Head of caudate nucleus (tissue), 42 donors: ENCODE measurements at regions of chr3 and their contacts with region 1.

Region 1: DNA sequence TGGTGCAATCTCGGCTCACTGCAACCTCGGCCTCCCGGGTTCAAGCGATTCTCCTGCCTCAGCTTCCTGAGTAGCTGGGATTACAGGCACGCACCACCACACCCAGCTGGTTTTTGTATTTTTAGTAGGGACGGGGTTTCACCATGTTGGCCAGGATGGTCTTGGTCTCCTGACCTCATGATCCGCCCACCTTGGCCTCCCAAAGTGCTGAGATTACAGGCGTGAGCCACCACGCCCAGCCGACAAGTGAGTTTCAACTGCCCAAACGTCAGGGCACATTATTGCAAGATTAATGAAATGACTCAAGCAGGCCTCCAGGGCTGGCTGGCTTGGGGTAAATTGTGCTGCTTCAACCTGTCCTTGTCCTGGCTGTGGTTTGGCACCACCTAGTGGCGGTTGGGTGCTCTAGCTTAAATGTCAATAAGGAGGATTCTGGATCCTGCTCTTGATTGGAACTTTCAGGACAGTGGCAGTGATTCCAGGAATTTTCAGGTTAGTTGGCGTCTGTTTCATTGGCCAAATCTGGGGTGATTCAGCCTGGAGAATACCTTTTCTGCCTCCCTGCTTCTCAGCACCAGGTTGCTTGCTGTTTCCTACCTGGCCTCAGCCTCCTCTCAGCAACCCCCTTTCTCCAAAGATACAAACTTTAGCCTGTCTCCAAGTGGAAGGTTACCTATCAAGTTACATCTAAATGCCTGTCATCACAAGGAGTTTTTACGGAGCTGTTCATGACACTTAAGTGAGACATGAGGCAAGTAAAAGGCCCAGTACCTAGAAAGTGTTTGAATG is 32.4 kb upstream of the SACM1L start:
- DNase-seq: peak; percentile 81 to 97 (median 91)

Region 2: GRCh38 chr3:45224824-45225464 is 431.8 kb before region 1 on chr3:
- intact Hi-C with region 1: loop called (anchors 10 kb)
- DNase-seq: peak; percentile 66 to 91 (median 80)

Region 3: GRCh38 chr3:45513041-45513440 is 143.7 kb before region 1 on chr3:
- intact Hi-C with region 1: loop called (anchors 2 kb)
- DNase-seq: no peak

Region 4: GRCh38 chr3:45593708-45594609 is 62.8 kb before region 1 on chr3:
- intact Hi-C with region 1: loop called (anchors 5 kb)
- DNase-seq: peak in 38 of 42 donors; percentile 19 to 75 (median 48)

Region 5: GRCh38 chr3:45730409-45731154 is 73.8 kb after region 1 on chr3:
- intact Hi-C with region 1: no loop called
- DNase-seq: no peak

Region 6: GRCh38 chr3:45968706-45969105 is 311.9 kb after region 1 on chr3:
- intact Hi-C with region 1: no loop called
- DNase-seq: no peak

Region 7: DNA sequence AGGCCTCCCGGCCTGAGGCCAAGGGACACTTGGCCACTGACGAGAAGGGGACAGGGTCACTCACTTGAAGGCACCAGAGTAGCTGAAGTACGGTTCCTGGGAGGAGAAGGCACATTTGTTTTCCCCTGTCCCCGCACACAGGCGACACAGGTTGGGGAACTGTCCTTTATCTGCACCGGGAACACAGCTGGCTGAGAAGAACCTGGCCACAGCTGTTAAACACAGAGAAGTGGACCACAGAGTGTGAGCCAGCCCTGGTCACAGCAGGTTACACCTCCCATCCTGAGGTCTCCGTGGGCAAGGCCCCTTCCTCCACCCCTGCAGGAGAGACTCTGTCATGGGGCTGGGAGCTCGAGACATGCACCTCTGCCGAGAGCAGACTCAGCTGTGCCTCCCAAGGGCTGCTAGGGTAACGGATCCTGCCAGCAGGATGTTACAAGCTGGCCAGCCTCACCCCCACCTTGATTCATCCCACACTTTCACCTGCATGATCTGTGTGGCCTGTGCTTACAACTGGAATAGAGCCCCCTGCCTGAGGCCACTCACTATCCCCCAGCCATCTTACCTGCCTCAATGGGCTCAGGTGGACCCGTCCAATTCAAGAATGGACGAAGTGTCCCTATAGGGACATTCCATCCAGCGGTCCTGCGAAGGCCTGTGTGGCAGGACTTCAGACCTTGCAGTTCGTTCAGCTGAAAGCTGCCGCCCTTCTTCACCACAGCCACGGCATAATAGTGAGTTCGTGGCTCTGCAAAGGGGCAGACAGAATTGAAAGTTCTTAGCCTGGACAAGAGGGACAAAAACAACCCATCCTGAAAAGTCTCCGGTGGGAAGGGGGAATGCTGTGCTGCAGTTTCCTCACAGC is 798.7 kb after region 1 on chr3:
- intact Hi-C with region 1: no loop called
- DNase-seq: peak in 2 of 42 donors; percentile 14 to 24